Right ventricle myocardium superior (tissue), 1 donor: ENCODE measurements at regions of chr17 and their contacts with region 1.

Region 1: GRCh38 chr17:4412933-4413831 is 20.6 kb upstream of the SPNS3 start:
- DNase-seq: peak; percentile 96
- ATAC-seq: peak; percentile 98

Region 2: DNA sequence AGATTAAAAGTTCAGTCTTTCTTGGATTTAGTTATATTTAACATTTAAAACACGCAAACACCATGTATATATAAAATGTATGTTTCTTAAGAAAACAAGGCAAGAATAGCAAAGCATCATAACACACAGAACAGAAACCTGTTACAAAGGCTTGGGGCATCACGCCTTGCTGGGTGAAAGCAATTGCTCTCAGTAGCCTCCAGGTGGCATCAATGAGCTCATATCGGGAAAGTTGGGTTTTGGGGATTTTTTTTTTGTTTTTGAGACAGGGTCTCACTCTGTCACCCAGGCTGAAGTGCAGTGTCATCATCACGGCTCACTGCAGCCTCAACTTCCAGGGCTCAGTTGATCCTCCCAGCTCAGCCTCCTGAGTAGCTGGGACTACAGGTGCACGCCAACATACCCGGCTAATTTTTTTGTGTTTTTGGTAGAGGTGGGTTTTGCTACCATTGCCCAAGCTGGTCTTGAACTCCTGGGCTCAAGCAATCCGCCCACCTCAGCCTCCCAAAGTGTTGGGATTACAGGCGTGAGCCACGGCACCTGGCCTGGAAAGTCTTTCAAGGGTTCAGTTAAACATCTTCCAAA is 213.3 kb before region 1 on chr17:
- intact Hi-C with region 1: loop called (anchors 5 kb)
- DNase-seq: no peak
- ATAC-seq: peak; percentile 49